Right ventricle myocardium superior (tissue), 1 donor: ENCODE measurements at regions of chr17 and their contacts with region 1.

Region 1: GRCh38 chr17:68539548-68540467 is 27.6 kb downstream of the PRKAR1A start:
- DNase-seq: no peak
- ATAC-seq: peak; percentile 30

Region 2: GRCh38 chr17:68511671-68512246 is 28.0 kb before region 1 on chr17:
- intact Hi-C with region 1: no loop called
- DNase-seq: peak; percentile 88
- ATAC-seq: peak; percentile 75

Region 3: DNA sequence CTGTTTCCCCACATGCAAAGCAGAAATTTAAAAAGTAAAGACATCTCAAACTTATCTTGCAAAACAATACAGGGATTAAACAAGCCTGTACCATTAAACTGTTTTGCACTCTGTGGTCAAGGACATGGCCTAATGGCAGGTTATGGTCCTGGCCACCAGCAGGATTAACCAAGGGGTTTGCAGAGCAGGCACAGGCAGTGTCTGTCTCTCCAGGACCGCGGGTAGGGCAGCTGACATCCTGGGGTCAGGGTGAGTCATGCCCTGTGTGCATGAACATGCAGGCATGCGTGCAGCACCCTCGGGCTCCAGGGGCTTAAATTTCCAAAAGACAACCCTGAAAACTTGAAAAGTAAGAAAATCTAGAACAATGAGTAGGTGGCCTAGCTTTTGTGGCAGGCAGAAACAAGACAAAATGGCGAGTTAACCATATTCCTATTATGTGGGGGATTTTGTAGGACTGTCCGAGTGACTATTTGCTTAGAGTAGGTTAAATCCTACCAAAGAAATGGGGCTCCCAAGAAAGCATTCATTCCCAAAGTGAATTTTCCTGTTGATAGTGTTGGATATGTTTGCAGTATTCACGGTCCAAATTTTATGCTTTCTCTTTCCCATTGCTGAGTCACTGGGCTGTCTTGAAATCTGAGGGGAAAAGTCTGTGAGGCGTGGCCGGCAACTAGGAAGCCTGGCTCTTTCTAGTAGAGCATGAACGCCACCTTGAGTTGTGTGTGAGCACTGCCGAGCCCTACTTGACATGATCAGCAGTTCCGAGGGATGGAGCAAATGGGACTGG is 219.7 kb after region 1 on chr17:
- intact Hi-C with region 1: loop called (anchors 10 kb)
- DNase-seq: peak; percentile 92
- ATAC-seq: peak; percentile 99